B cell (primary cell): ENCODE measurements at regions of chr11 and their contacts with region 1.

Region 1: DNA sequence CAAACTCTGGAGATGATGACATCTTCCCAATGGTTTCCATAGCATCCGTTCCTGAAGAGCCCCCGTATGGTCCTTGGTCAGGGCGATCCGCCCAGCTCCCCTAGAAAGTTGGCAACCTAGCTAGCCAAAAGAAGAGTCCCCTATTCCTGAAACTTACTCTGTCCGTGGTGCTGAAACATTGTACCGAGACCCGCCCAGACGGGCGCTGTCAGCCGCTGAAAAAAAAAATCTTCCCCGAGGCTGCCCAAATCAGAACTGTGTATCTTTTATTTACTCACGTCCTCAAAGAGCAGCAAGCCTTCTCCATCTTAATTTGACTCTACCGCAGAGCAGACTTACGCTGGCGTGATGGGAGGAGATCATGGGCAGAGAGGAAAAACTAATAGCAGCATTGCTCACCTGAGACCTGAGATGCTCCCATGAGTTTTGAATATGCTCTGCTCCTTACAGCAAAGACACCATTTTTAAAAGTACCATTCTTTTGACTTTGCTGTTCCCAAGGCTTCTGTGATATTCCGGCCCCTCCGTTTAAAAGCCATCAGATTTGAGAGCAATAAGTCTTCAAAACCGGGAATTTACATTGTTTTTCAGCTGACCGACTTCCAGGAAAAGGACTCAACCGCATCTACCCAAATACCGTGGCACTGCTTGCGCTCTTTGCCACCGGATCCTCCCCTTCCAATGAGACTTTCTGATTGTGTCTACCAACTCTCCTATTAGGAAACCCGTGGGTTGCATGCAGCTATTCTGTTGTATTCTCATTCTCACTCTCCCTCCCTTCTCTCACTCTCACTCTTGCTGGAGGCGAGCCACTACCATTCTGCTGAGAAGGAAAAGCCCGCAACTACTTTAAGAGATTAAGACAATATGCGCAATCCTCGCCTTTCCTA is at the start of gene SLC17A6:
- DNase-seq: no peak
- ATAC-seq: no peak
- H3K4me3 ChIP-seq: no peak within 1 kb of the TSS
- H3K4me3 Mint-ChIP-seq: no peak within 1 kb of the TSS
- H3K27ac ChIP-seq: no peak within 1 kb of the TSS
- H3K27ac Mint-ChIP-seq: no peak within 1 kb of the TSS
- H3K4me1 ChIP-seq: peaks cover 0 to 8% of the 10 kb centered on the region in 2 donors
- H3K4me1 Mint-ChIP-seq: peaks cover 5% of the 10 kb centered on the region
- H3K27me3 ChIP-seq: peaks cover 0 to 42% (median 38%) of the 10 kb centered on the region in 4 experiments
- H3K27me3 Mint-ChIP-seq: peaks cover 47% of the 10 kb centered on the region
- CTCF ChIP-seq: no peak
- total RNA-seq, gene SLC17A6: not detected in 2 replicates

Region 2: DNA sequence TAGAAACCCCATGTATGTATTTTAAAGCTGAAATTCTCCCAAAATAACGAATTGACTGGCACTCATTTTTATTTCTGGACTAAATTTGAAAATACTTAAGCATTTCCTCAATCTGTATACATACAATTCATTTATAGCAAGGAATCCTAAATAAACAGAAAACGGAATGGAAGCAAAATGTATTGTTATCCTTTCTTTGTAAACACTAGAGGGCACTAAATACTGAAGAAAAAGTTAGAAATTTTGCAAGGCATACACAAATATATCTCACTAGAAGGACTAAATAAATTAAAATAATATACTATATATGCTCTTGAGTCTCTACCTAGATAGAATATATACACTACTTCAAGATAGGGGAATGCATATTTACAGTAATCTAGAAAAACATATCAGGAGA is 168.0 kb before region 1 on chr11:
- CTCF ChIA-PET with region 1: no interaction called
- POLR2A ChIA-PET with region 1: no interaction called
- intact Hi-C with region 1: no loop called
- DNase-seq: no peak
- ATAC-seq: no peak
- H3K4me3 ChIP-seq: no peak overlapping the region
- H3K4me3 Mint-ChIP-seq: no peak overlapping the region
- H3K27ac ChIP-seq: no peak overlapping the region
- H3K27ac Mint-ChIP-seq: no peak overlapping the region
- H3K4me1 ChIP-seq: no peaks in the 10 kb centered on the region
- H3K4me1 Mint-ChIP-seq: no peaks in the 10 kb centered on the region
- H3K27me3 ChIP-seq: no peaks in the 10 kb centered on the region
- H3K27me3 Mint-ChIP-seq: no peaks in the 10 kb centered on the region
- CTCF ChIP-seq: no peak

Region 3: DNA sequence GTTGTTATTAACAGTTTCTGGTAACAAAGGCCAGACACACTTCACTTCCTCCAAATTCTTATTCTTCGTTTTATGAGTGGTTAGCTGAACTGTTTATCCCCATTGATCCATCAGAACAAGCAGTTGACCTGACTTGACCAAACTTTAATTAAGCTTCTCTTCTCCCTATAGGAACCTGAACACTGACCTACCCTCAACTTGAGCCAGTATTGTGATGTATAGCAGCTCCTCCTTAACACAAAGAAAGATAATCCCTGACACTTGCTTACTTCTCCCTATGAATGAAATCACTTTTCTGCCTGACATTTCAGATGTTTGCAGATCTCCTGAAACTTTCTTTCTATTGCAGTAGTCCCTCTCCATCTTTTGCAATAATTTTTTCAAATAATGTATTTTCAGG is 103.1 kb before region 1 on chr11:
- CTCF ChIA-PET with region 1: no interaction called
- POLR2A ChIA-PET with region 1: no interaction called
- intact Hi-C with region 1: no loop called
- DNase-seq: no peak
- ATAC-seq: no peak
- H3K4me3 ChIP-seq: no peak overlapping the region
- H3K4me3 Mint-ChIP-seq: no peak overlapping the region
- H3K27ac ChIP-seq: no peak overlapping the region
- H3K27ac Mint-ChIP-seq: no peak overlapping the region
- H3K4me1 ChIP-seq: no peaks in the 10 kb centered on the region
- H3K4me1 Mint-ChIP-seq: no peaks in the 10 kb centered on the region
- H3K27me3 ChIP-seq: no peaks in the 10 kb centered on the region
- H3K27me3 Mint-ChIP-seq: no peaks in the 10 kb centered on the region
- CTCF ChIP-seq: no peak

Region 4: DNA sequence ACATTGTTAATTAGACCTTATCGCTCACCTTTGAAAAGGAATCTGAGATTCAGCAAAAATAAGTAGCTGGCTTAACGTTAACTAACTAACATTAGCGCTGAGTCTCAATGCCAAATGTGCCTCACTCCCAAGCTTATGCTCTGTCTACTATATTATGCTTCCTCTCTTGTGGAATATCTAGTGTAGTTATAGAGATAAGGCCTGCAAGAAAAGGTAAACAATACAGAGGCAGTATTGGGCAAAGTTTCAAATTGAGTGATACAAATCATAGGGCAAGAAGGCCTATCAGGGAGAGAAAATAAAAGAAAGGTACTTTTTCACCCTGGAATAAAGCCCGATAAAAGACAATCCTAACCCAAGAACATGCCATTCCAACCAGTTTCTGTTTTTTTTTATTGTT is 61.3 kb before region 1 on chr11:
- CTCF ChIA-PET with region 1: no interaction called
- POLR2A ChIA-PET with region 1: no interaction called
- intact Hi-C with region 1: no loop called
- DNase-seq: no peak
- ATAC-seq: no peak
- H3K4me3 ChIP-seq: no peak overlapping the region
- H3K4me3 Mint-ChIP-seq: no peak overlapping the region
- H3K27ac ChIP-seq: no peak overlapping the region
- H3K27ac Mint-ChIP-seq: no peak overlapping the region
- H3K4me1 ChIP-seq: no peaks in the 10 kb centered on the region
- H3K4me1 Mint-ChIP-seq: no peaks in the 10 kb centered on the region
- H3K27me3 ChIP-seq: no peaks in the 10 kb centered on the region
- H3K27me3 Mint-ChIP-seq: no peaks in the 10 kb centered on the region
- CTCF ChIP-seq: no peak

Region 5: DNA sequence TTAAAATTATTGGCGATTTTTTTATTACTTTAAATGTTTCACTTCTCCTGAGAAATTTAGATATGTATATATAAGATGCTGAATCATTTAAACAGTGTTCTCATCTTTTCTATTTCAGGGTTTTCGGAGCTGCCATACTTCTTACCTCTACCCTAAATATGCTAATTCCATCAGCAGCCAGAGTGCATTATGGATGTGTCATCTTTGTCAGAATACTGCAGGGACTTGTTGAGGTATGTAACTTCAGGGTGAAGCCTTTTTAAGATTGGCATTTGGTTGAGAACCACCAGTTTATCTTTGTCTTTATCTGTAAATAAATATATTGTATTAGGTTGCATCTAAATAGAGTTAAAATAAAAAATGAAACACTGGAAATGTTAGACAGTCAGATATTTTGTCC is 21.5 kb after region 1 on chr11:
- CTCF ChIA-PET with region 1: no interaction called
- POLR2A ChIA-PET with region 1: no interaction called
- intact Hi-C with region 1: no loop called
- DNase-seq: no peak
- ATAC-seq: no peak
- H3K4me3 ChIP-seq: no peak overlapping the region
- H3K4me3 Mint-ChIP-seq: no peak overlapping the region
- H3K27ac ChIP-seq: no peak overlapping the region
- H3K27ac Mint-ChIP-seq: no peak overlapping the region
- H3K4me1 ChIP-seq: no peaks in the 10 kb centered on the region
- H3K4me1 Mint-ChIP-seq: no peaks in the 10 kb centered on the region
- H3K27me3 ChIP-seq: no peaks in the 10 kb centered on the region
- H3K27me3 Mint-ChIP-seq: peaks cover 8% of the 10 kb centered on the region
- CTCF ChIP-seq: no peak

Region 6: DNA sequence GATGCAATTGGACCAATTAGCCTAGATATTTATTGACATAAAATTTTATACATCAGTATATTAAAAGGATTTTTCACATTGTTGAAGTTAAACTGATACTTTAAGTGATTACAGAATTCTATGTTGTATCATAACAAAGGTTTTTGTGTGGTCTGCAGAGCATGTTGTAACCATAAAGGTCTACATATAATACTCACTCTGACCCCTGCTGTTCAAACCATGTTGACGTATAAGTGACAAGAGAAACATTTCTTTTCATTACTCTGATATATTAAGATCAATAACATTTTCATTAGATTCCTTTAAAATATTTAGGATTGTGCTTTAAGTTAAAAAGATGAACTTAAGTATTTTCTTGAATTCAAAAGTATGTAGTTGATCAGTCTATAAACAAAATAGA is 392.5 kb after region 1 on chr11:
- CTCF ChIA-PET with region 1: interaction called, 7 read pairs
- POLR2A ChIA-PET with region 1: no interaction called
- intact Hi-C with region 1: loop called (anchors 1 kb)
- DNase-seq: peak; percentile 18
- ATAC-seq: no peak
- H3K4me3 ChIP-seq: no peak overlapping the region
- H3K4me3 Mint-ChIP-seq: no peak overlapping the region
- H3K27ac ChIP-seq: no peak overlapping the region
- H3K27ac Mint-ChIP-seq: no peak overlapping the region
- H3K4me1 ChIP-seq: no peaks in the 10 kb centered on the region
- H3K4me1 Mint-ChIP-seq: no peaks in the 10 kb centered on the region
- H3K27me3 ChIP-seq: no peaks in the 10 kb centered on the region
- H3K27me3 Mint-ChIP-seq: no peaks in the 10 kb centered on the region
- CTCF ChIP-seq: peak; percentile 40